ENCODE measurements at regions of chr10 and their contacts with region 1.

Region 1: GRCh38 chr10:60646966-60647796 is 131.1 kb upstream of the CDK1 start:
- DNase-seq: no peak
- ATAC-seq: peak; percentile 59

Region 2: GRCh38 chr10:60444494-60445064 is 202.6 kb before region 1 on chr10:
- intact Hi-C with region 1: loop called in 1 of 2 experiments (anchors 5 kb)
- DNase-seq: no peak
- ATAC-seq: no peak

Region 3: DNA sequence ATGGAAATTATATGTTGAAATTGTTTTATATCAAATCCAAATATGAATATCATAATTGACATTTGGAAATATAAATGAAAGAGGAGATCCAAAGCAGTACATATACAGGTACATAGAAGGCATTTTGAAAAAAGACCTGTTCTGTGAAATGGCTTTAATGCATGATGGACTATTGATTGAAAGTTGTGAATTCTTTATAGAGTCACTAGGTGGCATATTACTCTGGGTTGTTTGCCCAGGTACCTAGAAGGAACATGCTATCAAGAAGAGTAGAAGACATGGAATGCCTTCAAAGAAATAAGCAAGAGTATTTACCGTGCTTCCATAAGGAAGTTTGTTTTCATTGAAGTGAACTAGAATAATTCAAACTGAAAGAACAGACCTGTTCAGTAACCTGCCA is 97.5 kb before region 1 on chr10:
- intact Hi-C with region 1: no loop called
- DNase-seq: no peak
- ATAC-seq: peak; percentile 89